Left cardiac atrium (tissue), 4 donors: ENCODE measurements at regions of chr16 and their contacts with region 1.

Region 1: GRCh38 chr16:11139326-11140097 is 116.5 kb downstream of the SOCS1 start:
- DNase-seq: no peak
- ATAC-seq: peak; percentile 23 to 26

Region 2: GRCh38 chr16:11121914-11122692 is 17.4 kb before region 1 on chr16:
- intact Hi-C with region 1: no loop called
- DNase-seq: no peak
- ATAC-seq: peak in 1 of 2 donors; percentile 38

Region 3: DNA sequence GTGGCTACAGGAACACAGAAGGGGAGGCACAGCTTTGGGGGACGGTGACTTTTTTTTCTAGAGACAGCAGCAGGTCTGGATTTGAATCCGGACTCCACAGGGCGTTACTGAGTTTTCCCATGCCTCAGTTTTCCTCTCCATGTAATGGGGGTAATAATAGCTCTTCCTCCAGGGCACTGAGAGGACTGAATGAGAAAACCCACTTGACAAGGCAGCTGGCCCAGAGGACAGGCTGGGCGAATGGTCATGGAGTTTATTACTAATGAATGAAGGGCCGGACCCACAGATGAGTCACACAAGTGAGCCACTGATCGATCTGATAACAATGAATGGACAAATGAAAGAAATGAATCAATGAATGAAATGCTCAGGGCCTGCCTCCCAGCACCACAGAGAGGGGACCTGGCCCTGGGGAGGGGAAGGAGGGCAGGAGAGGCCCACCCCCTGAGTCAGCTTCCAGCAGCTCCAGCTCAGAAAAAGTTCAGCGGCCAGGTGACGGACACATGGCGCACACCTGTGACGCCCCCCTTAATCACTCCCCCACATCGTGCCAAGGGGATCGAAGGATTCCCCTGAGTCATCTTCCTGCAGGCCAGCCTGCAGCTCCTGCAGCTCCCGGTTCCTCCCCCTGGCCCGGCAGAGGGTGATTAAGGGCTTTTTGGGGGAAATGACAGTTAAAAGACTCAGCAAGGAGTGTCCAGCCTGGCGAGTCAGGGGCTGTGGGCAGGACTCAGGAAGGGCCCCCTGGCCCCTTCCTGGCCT is 62.2 kb after region 1 on chr16:
- intact Hi-C with region 1: loop called in 1 of 2 experiments (anchors 10 kb)
- DNase-seq: no peak
- ATAC-seq: peak; percentile 7 to 44

Region 4: DNA sequence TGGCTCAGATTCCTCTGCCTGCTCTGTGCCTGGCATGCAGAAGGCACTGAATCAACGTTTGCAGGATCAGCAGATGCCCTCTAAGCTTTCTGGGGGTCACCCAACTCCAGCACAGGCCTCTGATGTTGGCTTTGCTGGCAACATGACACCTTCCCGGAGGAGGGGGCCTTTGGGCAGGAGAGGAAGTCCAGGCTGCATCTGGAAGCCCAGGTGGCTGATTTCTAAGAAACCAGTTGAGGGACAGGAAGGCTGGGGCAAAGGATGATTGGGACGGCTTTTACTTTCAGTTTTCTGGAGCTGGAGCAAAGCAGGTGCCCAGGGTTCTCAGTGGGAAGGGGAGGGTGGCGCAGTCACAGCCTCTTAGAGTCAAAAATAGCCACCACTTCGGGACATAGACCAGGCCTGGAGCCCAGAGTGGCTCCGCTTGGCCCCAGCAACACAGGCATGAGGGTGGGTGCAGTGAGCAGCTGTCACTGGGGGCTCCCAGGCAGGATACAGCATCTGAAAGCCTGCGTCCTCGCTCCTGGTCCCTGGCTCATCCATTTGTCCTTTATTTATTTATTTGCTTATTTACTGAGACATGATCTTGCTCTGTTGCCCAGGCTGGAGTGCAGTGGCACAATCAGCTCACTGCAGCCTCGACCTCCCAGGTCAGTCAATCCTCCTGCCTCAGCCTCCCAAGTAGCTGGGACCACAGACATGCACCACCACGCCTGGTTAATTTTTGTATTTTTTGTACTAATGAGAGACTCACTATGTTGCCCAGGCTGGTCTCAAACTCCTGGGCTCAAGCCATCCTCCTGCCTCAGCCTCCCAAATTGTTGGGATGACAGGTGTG is 101.3 kb after region 1 on chr16:
- intact Hi-C with region 1: loop called in 1 of 2 experiments (anchors 5 kb)
- DNase-seq: no peak
- ATAC-seq: peak; percentile 91